Activated CD4-positive, alpha-beta memory T cell treated with anti-CD3 and anti-CD28 coated beads for 36 hours (primary cell): ENCODE measurements at regions of chr19 and their contacts with region 1.

Region 1: DNA sequence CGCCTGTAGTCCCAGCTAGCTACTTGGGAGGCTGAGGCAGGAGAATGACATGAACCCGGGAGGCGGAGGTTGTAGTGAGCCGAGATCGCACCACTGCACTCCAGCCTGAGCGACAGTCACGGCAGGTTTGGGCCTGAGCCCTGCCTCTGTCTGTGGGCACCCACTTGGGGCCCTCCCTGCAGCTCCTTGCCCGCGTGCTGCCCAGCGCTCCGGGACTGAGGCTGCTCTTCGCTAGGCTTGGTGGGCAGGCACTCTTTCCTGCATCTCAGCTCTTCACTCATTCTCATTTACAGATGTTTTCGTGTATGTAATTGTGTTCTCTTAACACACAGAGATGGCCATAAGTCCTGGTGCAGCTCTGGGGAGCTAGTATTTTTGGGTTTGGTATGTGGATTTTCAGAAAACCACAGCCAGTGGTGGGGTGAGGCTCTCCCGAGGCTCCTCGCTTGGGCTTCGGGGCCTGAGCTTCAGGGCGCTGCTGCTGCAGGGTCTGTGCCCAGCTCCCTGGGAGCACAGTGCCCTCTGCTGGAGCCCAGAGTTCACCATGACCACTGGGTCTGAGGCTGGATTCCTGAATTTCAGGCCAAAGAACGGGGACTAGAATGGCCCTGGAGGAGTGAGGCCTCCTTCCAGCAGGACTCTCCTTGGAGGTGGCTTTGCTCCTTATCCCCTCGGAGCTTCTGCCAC is 15.2 kb downstream of the UPF1 start:
- DNase-seq: peak; percentile 79
- H3K4me3 Mint-ChIP-seq: no peak overlapping the region
- H3K27ac Mint-ChIP-seq: peak overlapping the region; percentile 24
- H3K4me1 Mint-ChIP-seq: peaks cover 70% of the 10 kb centered on the region
- H3K27me3 Mint-ChIP-seq: no peaks in the 10 kb centered on the region

Region 2: DNA sequence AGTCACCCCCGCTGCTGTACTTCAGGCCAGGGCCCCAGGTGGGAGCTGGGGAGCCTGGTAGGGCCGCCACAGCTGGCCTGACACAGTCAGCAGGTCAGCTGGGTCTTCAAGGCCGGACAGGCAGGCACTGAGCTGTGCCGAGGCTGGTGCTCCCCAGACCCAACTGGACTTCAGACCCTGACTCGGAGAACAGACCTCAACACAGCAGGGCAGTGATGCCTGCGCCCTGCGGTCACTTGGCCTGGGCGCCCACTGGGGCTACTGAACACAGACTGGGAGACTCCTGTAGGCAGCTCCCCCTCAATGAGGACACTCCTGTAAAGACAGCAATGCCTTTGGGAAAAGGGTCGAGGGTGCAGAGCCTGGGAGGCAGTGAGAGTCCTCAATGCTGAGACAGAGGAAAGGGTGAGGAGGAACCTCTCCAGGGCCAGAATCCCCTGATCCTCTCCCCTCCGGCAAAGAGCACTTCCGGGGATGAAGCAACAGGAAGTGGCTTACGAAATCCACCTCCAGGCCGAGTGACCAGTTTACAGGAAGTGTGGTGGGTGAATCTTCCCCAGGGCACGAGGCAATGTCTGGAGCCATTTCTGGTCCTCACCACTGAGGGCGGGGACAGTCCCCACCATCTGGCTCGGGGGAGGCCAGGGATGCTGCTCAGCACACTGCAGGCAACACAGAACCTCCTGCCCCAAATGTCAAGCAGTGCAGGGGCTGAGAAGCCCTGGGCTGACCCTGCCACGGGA is 368.3 kb before region 1 on chr19:
- CTCF ChIA-PET with region 1: interaction called, 3 read pairs
- POLR2A ChIA-PET with region 1: no interaction called
- intact Hi-C with region 1: loop called (anchors 10 kb)
- DNase-seq: peak; percentile 92
- H3K4me3 Mint-ChIP-seq: peak overlapping the region; percentile 54
- H3K27ac Mint-ChIP-seq: peak overlapping the region; percentile 96
- H3K4me1 Mint-ChIP-seq: peaks cover 93% of the 10 kb centered on the region
- H3K27me3 Mint-ChIP-seq: no peaks in the 10 kb centered on the region

Region 3: DNA sequence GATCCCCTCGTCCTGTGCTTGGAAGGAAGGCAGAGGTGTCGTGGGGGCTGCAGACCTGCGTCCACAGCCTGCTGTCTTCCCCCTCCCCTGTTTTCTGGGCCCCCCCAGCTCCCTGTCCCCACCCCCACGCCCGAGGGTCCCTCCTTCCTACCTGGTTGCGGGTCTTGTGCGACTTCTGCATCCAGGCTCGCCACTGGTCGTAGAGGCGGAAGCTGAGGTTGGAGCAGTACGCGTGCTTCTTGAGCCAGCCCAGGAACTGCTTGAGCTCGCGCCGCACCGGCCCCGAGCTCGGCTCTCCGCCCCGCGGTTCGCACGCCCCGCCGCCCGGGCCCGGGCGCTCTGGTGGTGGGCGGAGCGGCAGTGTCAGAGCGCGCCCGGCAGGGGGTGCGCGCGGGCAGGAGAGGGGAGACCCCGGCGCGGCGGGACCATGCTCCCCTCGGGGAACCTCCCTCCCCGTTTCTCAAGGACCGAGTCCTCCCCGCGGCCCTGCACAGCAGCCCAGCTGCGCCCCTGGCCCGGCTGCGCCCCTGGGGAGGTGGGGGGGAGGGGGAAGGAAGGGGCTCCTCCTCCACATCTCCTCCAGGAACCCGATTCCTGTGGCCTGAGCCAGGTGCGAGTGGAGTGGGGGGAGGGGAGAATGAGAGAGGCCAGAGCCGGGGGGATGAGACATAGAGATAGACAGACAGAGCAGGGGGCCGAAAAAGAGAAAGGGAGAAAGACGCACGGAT is 252.7 kb before region 1 on chr19:
- CTCF ChIA-PET with region 1: interaction called, 19 read pairs
- POLR2A ChIA-PET with region 1: interaction called, 6 read pairs
- intact Hi-C with region 1: loop called (anchors 2 kb)
- DNase-seq: peak; percentile 82
- H3K4me3 Mint-ChIP-seq: peak overlapping the region; percentile 59
- H3K27ac Mint-ChIP-seq: no peak overlapping the region
- H3K4me1 Mint-ChIP-seq: peaks cover 22% of the 10 kb centered on the region
- H3K27me3 Mint-ChIP-seq: no peaks in the 10 kb centered on the region

Region 4: GRCh38 chr19:18771328-18772242 is 75.4 kb before region 1 on chr19:
- CTCF ChIA-PET with region 1: interaction called, 9 read pairs
- POLR2A ChIA-PET with region 1: no interaction called
- intact Hi-C with region 1: loop called (anchors 5 kb)
- DNase-seq: peak; percentile 22
- H3K4me3 Mint-ChIP-seq: no peak overlapping the region
- H3K27ac Mint-ChIP-seq: no peak overlapping the region
- H3K4me1 Mint-ChIP-seq: no peaks in the 10 kb centered on the region
- H3K27me3 Mint-ChIP-seq: no peaks in the 10 kb centered on the region

Region 5: DNA sequence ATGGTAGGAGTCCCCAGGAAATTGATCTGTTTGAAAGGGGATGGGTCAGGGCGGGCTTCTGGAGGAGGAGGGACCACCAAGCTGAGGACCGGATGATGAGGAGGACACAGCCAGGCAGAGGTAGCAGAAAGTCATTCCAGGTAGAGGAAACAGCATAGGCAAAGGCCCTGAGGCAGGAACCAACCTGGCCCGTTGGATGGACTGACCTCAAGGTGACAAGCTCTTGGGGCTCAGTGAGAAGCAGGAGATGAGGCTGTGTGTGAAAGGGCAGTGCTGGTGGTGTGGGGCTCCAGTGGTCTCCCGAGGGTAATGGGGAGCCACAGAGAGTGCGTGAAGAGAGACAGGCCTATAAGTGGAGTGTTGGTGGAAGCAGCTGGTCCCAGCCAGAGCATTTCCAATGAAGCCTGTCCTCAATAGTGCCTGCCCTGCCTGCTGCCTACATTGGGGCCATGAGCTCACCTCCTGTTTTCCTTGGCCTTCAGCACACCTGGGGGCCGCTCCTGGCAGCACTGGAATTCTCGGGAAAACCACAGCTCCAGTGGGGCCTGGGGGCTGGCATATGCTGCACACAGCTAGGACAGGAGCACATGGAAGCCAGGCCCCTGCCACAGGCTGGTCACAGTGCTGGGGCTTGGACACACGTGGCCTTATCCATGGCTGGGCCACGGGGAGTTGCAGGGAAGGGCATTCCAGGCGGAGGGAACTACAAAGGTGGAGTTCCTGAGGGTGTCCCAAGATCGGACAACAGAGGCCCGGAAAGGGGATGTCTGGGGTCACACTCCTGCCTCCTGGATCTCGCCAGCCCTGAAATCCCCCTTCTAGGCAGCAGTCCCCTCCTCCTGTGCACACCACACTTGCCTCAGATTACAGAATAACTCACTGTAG is 53.6 kb before region 1 on chr19:
- CTCF ChIA-PET with region 1: interaction called, 10 read pairs
- POLR2A ChIA-PET with region 1: no interaction called
- intact Hi-C with region 1: no loop called
- DNase-seq: no peak
- H3K4me3 Mint-ChIP-seq: no peak overlapping the region
- H3K27ac Mint-ChIP-seq: no peak overlapping the region
- H3K4me1 Mint-ChIP-seq: peaks cover 20% of the 10 kb centered on the region
- H3K27me3 Mint-ChIP-seq: peaks cover 55% of the 10 kb centered on the region

Region 6: DNA sequence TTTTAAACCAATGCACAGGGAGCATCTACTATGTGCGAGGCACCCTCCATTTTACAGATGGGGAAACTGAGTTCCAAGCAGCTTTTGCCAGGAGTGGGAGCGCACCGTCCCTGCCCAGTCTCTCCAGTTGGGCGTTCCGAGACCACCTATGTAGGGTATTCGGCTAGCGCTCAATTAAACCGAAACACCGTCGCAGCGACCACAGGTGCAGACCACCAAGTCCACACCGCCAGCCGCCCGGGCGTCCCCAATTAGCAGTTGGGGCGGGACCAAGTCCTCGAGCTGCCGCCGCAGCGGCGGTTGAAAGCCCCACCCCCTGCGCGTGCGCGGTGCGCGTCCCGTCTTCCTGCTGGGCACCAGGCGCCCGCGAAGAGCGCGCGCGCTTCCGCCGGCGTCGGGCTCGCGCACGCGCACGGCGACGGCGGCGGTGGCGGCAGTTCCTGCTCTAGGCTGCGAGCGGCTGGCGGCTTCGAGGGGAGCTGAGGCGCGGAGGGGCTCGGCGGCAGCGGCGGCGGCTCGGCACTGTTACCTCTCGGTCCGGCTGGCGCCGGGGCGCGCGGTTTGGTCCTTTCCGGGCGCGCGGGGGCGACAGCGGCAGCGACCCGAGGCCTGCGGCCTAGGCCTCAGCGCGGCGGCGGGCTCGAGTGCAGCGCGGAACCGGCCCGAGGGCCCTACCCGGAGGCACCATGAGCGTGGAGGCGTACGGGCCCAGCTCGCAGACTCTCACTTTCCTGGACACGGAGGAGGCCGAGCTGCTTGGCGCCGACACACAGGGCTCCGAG is 15.3 kb before region 1 on chr19 and contains the start of gene UPF1:
- CTCF ChIA-PET with region 1: interaction called, 135 read pairs
- POLR2A ChIA-PET with region 1: interaction called, 53 read pairs
- intact Hi-C with region 1: no loop called
- DNase-seq: peak; percentile 96
- H3K4me3 Mint-ChIP-seq: peak within 1 kb of the TSS; percentile 96
- H3K27ac Mint-ChIP-seq: peak within 1 kb of the TSS; percentile 93
- H3K4me1 Mint-ChIP-seq: peaks cover 31% of the 10 kb centered on the region
- H3K27me3 Mint-ChIP-seq: no peaks in the 10 kb centered on the region
- total RNA-seq, gene UPF1: 71.7 to 77.2 TPM

Region 7: GRCh38 chr19:18865973-18866799 is 19.2 kb after region 1 on chr19:
- CTCF ChIA-PET with region 1: interaction called, 17 read pairs
- POLR2A ChIA-PET with region 1: no interaction called
- intact Hi-C with region 1: no loop called
- DNase-seq: peak; percentile 73
- H3K4me3 Mint-ChIP-seq: no peak overlapping the region
- H3K27ac Mint-ChIP-seq: no peak overlapping the region
- H3K4me1 Mint-ChIP-seq: peaks cover 6% of the 10 kb centered on the region
- H3K27me3 Mint-ChIP-seq: no peaks in the 10 kb centered on the region